Head of caudate nucleus (tissue), 42 donors: ENCODE measurements at regions of chr16 and their contacts with region 1.

Region 1: GRCh38 chr16:87324411-87325275 is 7.5 kb upstream of the C16orf95 start:
- DNase-seq: peak in 38 of 42 donors; percentile 26 to 81 (median 53)

Region 2: GRCh38 chr16:87062569-87063442 is 261.8 kb before region 1 on chr16:
- intact Hi-C with region 1: no loop called
- DNase-seq: peak; percentile 36 to 87 (median 64)

Region 3: DNA sequence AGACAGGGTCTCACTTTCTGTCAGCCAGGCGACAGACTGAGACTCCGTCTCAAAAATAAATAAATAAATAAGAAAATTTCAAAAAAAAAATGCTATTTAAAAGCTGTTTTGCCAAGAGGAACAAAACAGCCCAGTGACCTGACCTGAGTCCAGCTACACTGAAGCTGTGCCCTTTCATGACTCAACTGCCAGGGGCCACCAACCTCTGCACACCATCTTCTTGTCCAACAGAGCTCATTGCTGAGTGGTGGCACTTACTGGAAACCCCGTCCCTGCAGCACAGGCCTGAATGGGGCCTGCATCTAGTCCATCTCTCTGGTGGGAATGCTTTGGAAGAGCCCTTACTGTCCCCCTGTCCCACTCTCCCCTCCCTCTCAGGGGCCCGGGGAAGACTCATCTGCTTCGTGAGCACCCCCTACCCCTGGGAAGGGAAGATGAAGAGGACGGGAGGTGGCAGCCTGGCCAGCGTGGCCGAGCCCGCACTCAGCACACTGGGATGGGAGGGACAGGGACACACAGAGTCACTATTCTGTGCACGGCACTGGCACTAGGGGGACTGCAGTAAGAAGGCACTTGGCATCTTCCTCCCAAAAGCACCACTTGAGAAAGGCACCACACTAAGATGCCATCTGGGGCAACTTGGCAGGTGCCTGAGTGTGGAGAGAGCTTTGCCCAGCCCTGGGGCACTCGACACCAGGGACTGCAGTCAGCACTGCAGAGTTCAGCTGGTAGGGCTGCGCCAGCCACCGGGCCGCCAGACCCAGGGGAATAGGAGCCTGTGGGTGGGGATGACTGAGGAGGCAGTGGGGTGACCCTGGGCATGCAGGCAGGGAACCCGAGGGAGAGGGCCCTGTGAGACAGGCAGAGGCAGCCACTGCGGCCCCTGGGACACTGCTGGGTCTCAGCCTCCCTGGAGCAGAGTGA is 45.4 kb after region 1 on chr16:
- intact Hi-C with region 1: no loop called
- DNase-seq: peak in 4 of 42 donors; percentile 19 to 29 (median 28)

Region 4: DNA sequence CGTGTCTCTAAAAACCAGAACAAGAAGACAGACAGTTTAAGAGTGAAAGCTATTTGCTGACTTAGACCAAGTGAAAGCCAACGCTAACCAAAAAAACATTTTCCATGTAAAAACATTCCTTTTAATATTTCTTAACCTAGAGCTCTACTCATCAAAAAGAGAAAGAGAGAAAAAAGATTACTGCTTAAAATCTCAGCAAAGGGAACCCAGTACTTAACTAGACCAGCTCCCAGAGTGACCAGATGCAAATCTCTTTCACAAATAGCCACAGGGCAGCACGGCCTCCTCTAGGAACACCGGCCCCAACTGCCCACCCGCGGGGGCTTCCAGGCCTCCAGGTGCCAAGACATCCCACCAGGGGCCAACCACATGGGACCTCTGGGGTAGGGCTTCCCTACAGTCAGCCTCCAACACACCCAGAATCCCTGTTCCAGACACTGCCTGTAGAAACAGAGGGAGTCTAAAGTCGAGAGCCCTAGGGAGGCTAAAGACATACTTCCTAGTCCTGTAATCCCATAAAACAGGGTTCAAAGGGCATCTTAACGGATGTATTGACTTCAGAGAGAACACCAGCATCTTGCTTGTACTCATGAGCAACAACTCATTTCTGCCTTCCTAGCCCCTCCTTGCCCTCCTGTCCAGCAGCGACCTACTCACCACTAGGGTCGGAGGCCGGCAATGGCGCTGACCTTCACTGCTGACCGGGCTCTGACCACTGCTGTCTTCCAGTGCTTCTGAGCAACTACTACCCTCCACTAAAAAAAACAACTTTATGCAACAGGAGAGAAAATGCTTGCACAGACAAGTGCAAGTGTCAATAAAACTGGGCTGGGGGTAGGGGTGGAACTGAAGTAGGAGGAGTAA is 146.9 kb after region 1 on chr16:
- intact Hi-C with region 1: loop called (anchors 10 kb)
- DNase-seq: no peak

Region 5: DNA sequence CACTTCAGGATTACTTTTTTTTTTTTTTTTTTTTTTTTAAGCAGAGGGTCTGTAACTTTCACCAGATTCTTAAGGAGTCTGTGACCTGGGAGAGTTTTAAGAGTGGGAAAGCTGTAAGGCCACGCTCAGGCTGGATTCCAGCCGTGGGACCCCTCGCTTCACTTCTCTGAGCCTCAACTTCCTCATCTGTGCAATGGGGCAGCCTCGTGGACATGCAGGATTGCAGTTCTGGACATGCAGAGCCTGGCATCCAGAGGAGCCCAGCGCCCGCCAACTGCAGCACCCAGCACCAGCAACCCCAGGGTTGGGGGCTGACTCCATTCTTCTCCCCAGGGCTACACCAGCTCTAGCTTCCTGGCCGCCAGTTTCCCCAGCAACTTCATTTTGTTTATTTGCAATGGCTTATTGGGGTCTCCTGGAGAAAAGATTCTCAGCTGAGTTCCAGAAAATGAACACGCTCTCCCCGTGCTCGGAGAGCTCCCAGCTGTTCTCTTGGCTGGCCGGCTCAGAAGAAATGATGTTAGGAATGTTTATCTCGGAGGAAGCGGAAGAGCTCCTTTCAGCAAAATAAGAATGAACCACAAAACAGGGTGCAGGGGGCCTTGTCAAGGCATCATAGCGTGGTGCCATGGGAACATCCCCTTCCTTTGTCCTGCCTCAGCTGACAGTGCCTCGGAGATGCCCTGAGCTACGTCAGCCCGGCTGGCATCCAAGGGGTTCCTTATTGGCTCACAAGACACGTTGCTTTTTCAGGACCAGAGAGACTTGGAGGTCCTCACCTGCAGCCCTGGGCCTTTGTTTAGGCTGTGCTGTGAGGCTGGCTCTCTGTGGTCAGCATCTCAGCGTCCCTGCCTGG is 191.1 kb after region 1 on chr16:
- intact Hi-C with region 1: no loop called
- DNase-seq: peak in 2 of 42 donors; percentile 10 to 37